Activated CD4-positive, alpha-beta T cell treated with anti-CD3 and anti-CD28 coated beads, Interleukin-2, amount 10 ng/mL, durations not matched to agents 24 days and 14 days (primary cell): ENCODE measurements at regions of chr7 and their contacts with region 1.

Region 1: DNA sequence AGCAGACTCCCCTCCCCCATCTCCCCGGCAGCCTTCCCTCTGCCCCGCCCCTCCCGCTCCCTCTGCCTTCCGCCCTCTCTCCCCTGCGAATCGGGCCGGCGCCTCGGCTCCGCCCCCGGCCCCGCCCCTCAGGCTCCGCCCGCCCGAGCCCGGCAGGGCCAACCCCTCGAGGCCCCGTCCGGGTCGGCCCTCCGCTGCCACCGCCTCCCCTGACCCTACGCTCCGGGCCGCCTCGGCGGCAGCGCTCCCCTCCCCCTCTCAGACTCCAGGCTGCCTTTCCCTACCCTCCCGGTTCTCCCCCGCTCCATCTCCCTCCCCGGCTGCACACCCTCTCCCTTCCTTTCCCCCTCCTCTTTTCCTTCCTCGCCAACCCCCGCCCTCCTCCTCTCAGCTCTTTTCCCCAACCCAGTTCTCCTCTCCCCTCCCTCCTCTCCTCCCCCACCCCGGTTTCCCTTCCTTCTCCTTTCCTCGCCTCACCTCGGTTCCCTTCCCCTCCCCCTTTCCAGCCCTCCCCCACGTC is 1.6 kb downstream of the ZNF467 start:
- DNase-seq: peak; percentile 96
- H3K4me3 Mint-ChIP-seq: peak overlapping the region; percentile 86
- H3K27ac Mint-ChIP-seq: no peak overlapping the region
- H3K4me1 Mint-ChIP-seq: no peaks in the 10 kb centered on the region
- H3K27me3 Mint-ChIP-seq: peaks cover 32% of the 10 kb centered on the region

Region 2: DNA sequence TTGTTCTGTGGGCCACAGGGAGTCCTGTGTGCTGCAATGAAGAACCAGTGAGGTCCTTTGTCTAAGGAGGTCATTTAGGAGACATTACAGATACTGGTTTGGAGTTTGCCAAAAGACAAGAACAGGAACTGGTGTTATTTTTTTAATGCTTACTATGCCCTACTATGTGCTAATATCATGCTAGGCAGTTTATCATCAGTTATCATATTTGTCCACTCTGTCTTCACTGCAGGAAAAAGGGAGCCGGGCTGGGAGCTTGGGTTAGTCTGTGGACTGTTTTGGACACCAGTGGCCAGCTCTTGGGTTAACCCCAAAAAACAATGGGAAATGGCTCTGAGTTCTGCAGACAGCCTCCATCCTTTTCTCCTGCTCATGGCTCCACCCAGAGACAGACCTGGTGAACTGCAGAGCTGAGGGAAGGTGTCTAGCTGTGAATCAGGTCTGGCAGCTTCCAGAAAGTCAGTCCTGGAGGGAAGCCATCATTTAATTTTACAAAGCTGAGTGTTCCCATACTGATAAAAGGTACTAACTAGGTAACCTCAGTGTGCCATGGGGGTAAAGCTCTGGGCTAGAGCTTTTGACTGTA is 173.0 kb before region 1 on chr7:
- intact Hi-C with region 1: loop called (anchors 2 kb)
- DNase-seq: peak; percentile 80
- H3K4me3 Mint-ChIP-seq: no peak overlapping the region
- H3K27ac Mint-ChIP-seq: peak overlapping the region; percentile 87
- H3K4me1 Mint-ChIP-seq: peaks cover 30% of the 10 kb centered on the region
- H3K27me3 Mint-ChIP-seq: peaks cover 2% of the 10 kb centered on the region

Region 3: GRCh38 chr7:149690688-149691446 is 80.9 kb before region 1 on chr7:
- intact Hi-C with region 1: no loop called
- DNase-seq: no peak
- H3K4me3 Mint-ChIP-seq: no peak overlapping the region
- H3K27ac Mint-ChIP-seq: no peak overlapping the region
- H3K4me1 Mint-ChIP-seq: no peaks in the 10 kb centered on the region
- H3K27me3 Mint-ChIP-seq: peaks cover 50% of the 10 kb centered on the region

Region 4: GRCh38 chr7:149714050-149714909 is 57.5 kb before region 1 on chr7:
- intact Hi-C with region 1: loop called (anchors 2 kb)
- DNase-seq: peak; percentile 95
- H3K4me3 Mint-ChIP-seq: peak overlapping the region; percentile 90
- H3K27ac Mint-ChIP-seq: peak overlapping the region; percentile 71
- H3K4me1 Mint-ChIP-seq: peaks cover 17% of the 10 kb centered on the region
- H3K27me3 Mint-ChIP-seq: no peaks in the 10 kb centered on the region

Region 5: DNA sequence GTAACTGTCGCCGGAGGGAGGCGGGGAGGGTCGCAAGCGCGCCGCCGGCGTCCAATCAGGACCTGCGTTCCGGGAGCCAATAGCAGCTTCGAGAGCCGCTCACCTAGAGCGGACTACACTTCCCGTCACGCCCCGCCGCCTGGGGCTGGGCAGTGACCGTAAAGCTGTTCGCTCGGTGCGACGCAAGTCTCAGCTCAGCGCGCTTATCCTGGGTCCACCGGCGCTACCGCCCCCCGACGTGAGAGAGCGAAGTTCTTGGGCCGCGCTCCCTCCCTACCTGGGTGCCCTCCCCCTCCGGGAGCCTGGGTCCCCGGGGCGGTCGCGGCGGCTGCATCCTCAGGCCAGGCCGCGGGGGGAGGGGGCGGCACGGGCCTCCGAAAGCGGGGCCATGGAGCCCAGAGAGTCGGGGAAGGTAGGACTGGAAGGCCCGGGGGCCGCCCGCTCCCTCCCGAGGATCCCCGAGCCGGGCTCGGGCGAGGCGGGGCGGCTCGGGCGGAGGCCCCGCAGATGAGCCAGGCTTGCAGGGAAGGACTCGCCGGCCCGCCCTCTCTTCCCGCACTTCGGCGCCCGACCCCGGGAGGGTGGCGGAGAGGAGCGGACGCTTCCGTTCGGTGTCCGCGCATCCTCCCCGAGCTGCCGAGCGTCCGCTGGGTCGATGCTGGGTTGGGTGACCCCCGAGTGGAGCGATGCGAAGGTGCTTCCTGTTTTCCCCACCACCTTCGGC is 66.6 kb after region 1 on chr7 and contains the start of gene ZNF862:
- intact Hi-C with region 1: loop called (anchors 1 kb)
- DNase-seq: peak; percentile 98
- H3K4me3 Mint-ChIP-seq: peak within 1 kb of the TSS; percentile 88
- H3K27ac Mint-ChIP-seq: peak within 1 kb of the TSS; percentile 83
- H3K4me1 Mint-ChIP-seq: peaks cover 18% of the 10 kb centered on the region
- H3K27me3 Mint-ChIP-seq: peaks cover 20% of the 10 kb centered on the region
- total RNA-seq, gene ZNF862: 16.6 and 18.3 TPM in 2 replicates

Region 6: GRCh38 chr7:149873074-149873969 is 101.5 kb after region 1 on chr7 and contains the start of gene ATP6V0E2:
- intact Hi-C with region 1: loop called (anchors 2 kb)
- DNase-seq: peak; percentile 98
- H3K4me3 Mint-ChIP-seq: peak within 1 kb of the TSS; percentile 90
- H3K27ac Mint-ChIP-seq: peak within 1 kb of the TSS; percentile 92
- H3K4me1 Mint-ChIP-seq: peaks cover 71% of the 10 kb centered on the region
- H3K27me3 Mint-ChIP-seq: no peaks in the 10 kb centered on the region
- total RNA-seq, gene ATP6V0E2: 43.5 and 46.7 TPM in 2 replicates